ENCODE measurements at regions of chr1 and their contacts with region 1.

Region 1: DNA sequence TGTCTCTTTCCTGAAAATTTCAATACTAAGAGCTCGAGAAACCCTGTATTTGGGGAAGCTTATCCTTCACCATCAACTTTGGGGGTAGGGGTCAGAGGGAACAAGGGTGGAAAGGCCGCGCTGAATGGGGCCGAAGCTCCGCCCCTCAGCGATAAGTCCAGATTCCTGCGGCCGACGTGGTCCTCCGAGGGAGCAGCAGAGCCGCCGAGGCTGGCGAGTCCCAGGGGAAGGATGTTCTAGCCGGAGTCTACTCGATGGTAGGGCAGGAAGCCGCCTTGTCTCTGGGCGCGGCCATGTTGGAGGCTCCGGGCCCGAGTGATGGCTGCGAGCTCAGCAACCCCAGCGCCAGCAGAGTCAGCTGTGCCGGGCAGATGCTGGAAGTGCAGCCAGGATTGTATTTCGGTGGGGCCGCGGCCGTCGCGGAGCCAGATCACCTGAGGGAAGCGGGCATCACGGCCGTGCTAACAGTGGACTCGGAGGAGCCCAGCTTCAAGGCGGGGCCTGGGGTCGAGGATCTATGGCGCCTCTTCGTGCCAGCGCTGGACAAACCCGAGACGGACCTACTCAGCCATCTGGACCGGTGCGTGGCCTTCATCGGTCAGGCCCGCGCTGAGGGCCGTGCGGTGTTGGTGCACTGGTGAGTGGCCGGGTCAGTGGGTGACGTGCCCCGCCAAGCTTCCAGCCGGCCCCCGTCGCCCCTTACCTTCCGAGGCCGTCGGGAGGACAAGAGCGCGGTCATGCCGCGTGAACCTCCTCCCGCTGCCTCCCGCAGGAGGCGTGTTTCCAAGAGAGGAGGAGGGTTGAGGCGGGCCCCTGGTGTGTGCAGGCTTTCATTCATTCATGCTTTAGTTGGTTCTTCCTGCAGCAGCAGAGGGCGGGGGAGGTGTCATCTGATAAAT is at the start of gene DUSP12:
- DNase-seq: peak; percentile 96
- H3K4me3 ChIP-seq: peak within 1 kb of the TSS; percentile 43 to 77 (median 70)
- H3K27ac ChIP-seq: peak within 1 kb of the TSS; percentile 77
- H3K4me1 ChIP-seq: peaks cover 12% of the 10 kb centered on the region
- H3K27me3 ChIP-seq: peaks cover 0 to 2% of the 10 kb centered on the region in 2 experiments
- CTCF ChIP-seq: no peak
- POLR2A ChIP-seq: peak; percentile 92
- total RNA-seq, gene DUSP12: 26.8 and 28.3 TPM in 2 replicates

Region 2: GRCh38 chr1:161314201-161314981 is 435.4 kb before region 1 on chr1 and contains the start of gene SDHC:
- CTCF ChIA-PET with region 1: no interaction called
- POLR2A ChIA-PET with region 1: no interaction called
- dilution Hi-C with region 1: no loop called
- intact Hi-C with region 1: no loop called
- DNase-seq: peak; percentile 92
- H3K4me3 ChIP-seq: peak within 1 kb of the TSS; percentile 45 to 100 (median 80)
- H3K27ac ChIP-seq: peak within 1 kb of the TSS; percentile 93
- H3K4me1 ChIP-seq: peaks cover 9% of the 10 kb centered on the region
- H3K27me3 ChIP-seq: no peaks in the 10 kb centered on the region
- CTCF ChIP-seq: peak; percentile 39 to 64
- POLR2A ChIP-seq: peak; percentile 98
- total RNA-seq, gene SDHC: 136 and 148 TPM in 2 replicates

Region 3: GRCh38 chr1:161706482-161707347 is 43.0 kb before region 1 on chr1 and contains the start of gene FCRLA:
- CTCF ChIA-PET with region 1: no interaction called
- POLR2A ChIA-PET with region 1: no interaction called
- dilution Hi-C with region 1: no loop called
- intact Hi-C with region 1: no loop called
- DNase-seq: no peak
- H3K4me3 ChIP-seq: no peak within 1 kb of the TSS
- H3K27ac ChIP-seq: no peak within 1 kb of the TSS
- H3K4me1 ChIP-seq: no peaks in the 10 kb centered on the region
- H3K27me3 ChIP-seq: peaks cover 5 to 12% of the 10 kb centered on the region in 2 experiments
- CTCF ChIP-seq: no peak
- POLR2A ChIP-seq: no peak
- total RNA-seq, gene FCRLA: not detected in 2 replicates

Region 4: GRCh38 chr1:161738627-161739287 is 11.0 kb before region 1 on chr1:
- CTCF ChIA-PET with region 1: interaction called, 18 read pairs
- POLR2A ChIA-PET with region 1: interaction called, 3 read pairs
- dilution Hi-C with region 1: no loop called
- intact Hi-C with region 1: no loop called
- DNase-seq: peak; percentile 44
- H3K4me3 ChIP-seq: no peak overlapping the region
- H3K27ac ChIP-seq: no peak overlapping the region
- H3K4me1 ChIP-seq: peaks cover 3% of the 10 kb centered on the region
- H3K27me3 ChIP-seq: no peaks in the 10 kb centered on the region
- CTCF ChIP-seq: peak; percentile 39 to 43
- POLR2A ChIP-seq: no peak

Region 5: DNA sequence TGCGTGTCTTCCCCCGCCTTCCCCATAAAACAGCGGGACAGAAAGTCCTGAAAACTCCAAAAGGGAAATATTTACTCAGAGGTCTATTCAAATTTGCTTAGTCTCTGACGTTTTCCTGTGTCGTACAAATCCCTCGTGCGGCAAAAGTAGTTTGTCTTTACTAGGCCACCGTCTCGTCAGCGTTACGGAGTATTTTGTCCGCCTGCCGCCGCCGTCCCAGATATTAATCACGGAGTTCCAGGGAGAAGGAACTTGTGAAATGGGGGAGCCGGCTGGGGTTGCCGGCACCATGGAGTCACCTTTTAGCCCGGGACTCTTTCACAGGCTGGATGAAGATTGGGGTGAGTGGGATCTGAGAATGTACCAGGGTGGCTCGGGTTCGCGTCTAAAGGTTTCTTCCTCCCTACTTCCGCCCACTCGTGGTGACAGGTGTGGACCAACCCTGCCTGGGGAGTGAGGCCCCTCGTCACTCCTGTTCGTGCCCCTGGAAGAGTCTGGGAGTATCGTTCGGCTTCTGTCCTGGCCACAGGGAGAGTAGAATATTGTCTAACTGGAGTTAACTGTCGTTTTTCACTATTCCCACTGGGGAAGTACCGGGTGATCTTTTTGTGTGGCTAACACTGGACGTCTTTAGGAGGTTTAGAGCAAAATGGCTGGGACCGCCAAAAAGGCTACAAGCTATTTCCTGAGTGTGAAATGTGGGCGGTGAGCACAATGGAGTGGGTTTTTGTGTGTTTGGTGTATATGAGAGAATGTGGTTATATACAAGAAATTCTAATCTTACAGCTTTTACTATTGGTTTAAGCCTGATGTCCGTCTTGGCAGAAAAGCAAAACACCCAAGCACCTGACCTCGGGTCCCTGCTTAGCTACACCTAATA is 16.6 kb after region 1 on chr1 and contains the start of gene ATF6:
- CTCF ChIA-PET with region 1: interaction called, 6 read pairs
- POLR2A ChIA-PET with region 1: no interaction called
- dilution Hi-C with region 1: no loop called
- intact Hi-C with region 1: loop called (anchors 2 kb)
- DNase-seq: peak; percentile 97
- H3K4me3 ChIP-seq: peak within 1 kb of the TSS; percentile 64 to 92 (median 84)
- H3K27ac ChIP-seq: peak within 1 kb of the TSS; percentile 88
- H3K4me1 ChIP-seq: peaks cover 30% of the 10 kb centered on the region
- H3K27me3 ChIP-seq: no peaks in the 10 kb centered on the region
- CTCF ChIP-seq: no peak
- POLR2A ChIP-seq: peak; percentile 70
- total RNA-seq, gene ATF6: 38.8 and 40.3 TPM in 2 replicates

Measured in endothelial cell of umbilical vein (primary cell).